ENCODE measurements at regions of chr2 and their contacts with region 1.

Region 1: DNA sequence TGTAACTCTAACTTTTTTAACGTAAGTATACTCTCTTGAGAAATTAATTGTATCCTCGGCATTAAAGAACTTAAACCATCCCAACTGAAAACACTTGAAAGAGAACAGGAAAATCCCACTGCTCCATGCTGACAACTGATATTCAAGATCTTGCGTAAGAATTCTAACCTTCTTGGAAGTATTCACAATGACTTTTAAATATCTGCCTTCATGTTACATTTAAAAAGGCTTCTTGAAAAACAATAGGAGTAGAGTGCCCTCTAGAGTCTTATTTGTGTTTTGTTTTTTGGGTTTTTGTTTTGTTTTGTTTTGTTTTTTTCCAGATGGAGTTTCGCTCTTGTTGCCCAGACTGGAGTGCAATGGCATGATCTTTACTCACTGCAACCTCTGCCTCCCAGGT is 65.4 kb upstream of the DNAJC10 start:
- DNase-seq: no peak
- ATAC-seq: no peak
- H3K4me3 Mint-ChIP-seq: no peak overlapping the region
- H3K27ac Mint-ChIP-seq: no peak overlapping the region
- H3K4me1 Mint-ChIP-seq: peaks cover 3% of the 10 kb centered on the region
- H3K27me3 Mint-ChIP-seq: no peaks in the 10 kb centered on the region
- CTCF ChIP-seq: no peak

Region 2: DNA sequence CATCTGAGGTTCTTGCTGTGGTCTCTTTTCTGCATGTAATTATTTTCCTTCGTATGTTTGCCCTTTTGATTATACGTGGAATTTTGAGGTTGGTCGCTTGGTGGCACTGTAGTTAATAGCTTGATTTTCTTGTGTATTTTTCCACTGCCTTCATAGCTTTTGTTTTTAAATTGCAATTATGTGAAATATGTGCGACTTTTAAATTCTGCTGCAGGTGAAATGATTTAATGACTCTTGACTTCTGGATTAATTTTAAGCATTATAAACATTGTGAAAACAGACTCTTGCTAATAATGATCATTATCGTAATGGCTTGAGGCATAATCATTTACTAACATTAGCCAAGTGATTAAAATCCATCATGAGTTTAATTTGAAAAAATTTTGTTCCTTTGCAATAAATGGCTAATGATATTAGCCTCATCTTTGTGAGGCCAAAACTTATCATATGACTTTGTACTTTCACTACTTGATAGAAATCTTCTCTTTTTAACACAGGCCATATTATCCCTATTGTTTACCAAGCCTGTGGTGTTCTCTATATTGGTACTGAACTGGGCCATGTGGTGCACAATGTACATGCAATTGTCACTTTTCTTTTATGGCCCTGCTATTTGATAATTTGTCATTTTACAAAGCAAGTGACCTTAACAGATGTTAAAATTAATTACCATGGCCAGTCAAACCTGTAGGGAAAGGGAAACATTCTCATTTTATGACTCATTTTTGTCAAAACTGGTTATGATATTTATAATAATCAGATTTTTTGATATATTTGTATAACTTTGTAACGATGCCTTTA is 907.6 kb before region 1 on chr2:
- CTCF ChIA-PET with region 1: no interaction called
- POLR2A ChIA-PET with region 1: no interaction called
- intact Hi-C with region 1: loop called (anchors 10 kb)
- DNase-seq: no peak
- ATAC-seq: no peak
- H3K4me3 Mint-ChIP-seq: no peak overlapping the region
- H3K27ac Mint-ChIP-seq: no peak overlapping the region
- H3K4me1 Mint-ChIP-seq: no peaks in the 10 kb centered on the region
- H3K27me3 Mint-ChIP-seq: peaks cover 12% of the 10 kb centered on the region
- CTCF ChIP-seq: no peak

Region 3: DNA sequence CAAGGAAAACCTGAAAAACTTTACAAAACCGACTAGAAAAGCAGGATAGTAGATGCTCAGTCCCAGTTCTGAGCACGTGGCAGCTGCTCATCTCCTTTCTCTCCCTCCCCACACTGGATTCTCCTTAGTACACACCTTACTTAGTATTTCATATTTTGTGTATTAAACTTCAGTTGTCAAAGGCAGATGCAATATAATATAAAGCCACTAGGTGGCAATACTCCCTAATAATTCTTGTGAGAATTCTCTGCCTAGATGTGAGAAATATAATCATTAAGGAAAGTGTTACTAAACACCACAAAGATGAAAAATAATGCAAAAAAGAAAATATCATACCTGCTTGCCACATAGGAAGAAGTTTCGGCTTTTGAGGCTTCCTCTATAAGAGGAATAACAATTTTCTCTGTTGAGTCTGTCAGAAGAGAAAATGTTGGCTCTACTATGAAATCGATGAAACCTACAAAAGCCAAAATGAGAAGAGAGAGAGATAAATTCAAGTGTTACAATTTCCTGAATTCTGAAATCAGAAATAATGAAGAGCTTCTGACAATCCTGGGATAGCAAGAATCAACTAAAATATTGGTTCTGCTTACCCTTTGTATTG is 464.5 kb before region 1 on chr2:
- CTCF ChIA-PET with region 1: interaction called, 9 read pairs
- POLR2A ChIA-PET with region 1: no interaction called
- intact Hi-C with region 1: loop called (anchors 1 kb)
- DNase-seq: no peak
- ATAC-seq: no peak
- H3K4me3 Mint-ChIP-seq: no peak overlapping the region
- H3K27ac Mint-ChIP-seq: no peak overlapping the region
- H3K4me1 Mint-ChIP-seq: no peaks in the 10 kb centered on the region
- H3K27me3 Mint-ChIP-seq: peaks cover 2% of the 10 kb centered on the region
- CTCF ChIP-seq: peak; percentile 42

Region 4: DNA sequence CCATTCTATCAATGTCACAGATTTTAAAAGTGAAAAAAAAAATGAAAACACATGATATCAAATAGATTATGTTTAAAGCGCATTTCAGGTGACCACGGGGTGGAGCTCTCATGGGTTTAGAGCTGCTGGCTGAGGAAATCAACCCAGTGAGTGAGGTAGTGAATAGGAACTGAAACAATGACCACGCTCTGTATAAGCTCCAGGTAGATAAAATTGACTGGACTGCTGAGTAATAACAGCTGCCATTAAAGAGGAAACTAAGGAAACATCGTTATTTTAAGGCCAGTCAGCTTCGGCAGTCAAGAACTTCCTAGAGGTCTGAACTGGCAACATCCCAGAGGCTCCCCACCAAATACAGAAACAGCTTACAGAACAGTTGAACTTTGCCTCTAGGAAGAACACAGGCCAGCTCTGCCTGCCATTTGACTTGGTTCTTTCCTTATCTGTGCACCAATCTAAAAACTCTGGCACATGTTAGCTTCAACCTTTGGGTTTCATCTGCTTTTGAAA is 409.8 kb before region 1 on chr2:
- CTCF ChIA-PET with region 1: interaction called, 13 read pairs
- POLR2A ChIA-PET with region 1: no interaction called
- intact Hi-C with region 1: loop called (anchors 1 kb)
- DNase-seq: no peak
- ATAC-seq: peak; percentile 62
- H3K4me3 Mint-ChIP-seq: no peak overlapping the region
- H3K27ac Mint-ChIP-seq: no peak overlapping the region
- H3K4me1 Mint-ChIP-seq: peaks cover 7% of the 10 kb centered on the region
- H3K27me3 Mint-ChIP-seq: no peaks in the 10 kb centered on the region
- CTCF ChIP-seq: no peak

Measured in activated B cell treated with CpG ODN at 0.5 μM for 24 hours (primary cell).